K562 (cell line): ENCODE measurements at regions of chr19 and their contacts with region 1.

Region 1: GRCh38 chr19:43463381-43464136 is 1.8 kb downstream of the LYPD3 start:
- DNase-seq: peak; percentile 96 to 99 (median 99)
- ATAC-seq: peak; percentile 96
- H3K4me3 ChIP-seq: peak overlapping the region; percentile 67
- H3K27ac ChIP-seq: peak overlapping the region; percentile 44; the same call in 1 of the 3 replicates
- H3K4me1 ChIP-seq: peaks cover 19 to 27% of the 10 kb centered on the region in 2 experiments
- H3K27me3 ChIP-seq: peaks cover 17 to 18% of the 10 kb centered on the region in 2 experiments; a peak in 4 of 5 replicates
- CTCF ChIP-seq: no peak
- EP300 ChIP-seq: no peak
- POLR2A ChIP-seq: no peak
- RAD21 ChIP-seq: no peak

Region 2: DNA sequence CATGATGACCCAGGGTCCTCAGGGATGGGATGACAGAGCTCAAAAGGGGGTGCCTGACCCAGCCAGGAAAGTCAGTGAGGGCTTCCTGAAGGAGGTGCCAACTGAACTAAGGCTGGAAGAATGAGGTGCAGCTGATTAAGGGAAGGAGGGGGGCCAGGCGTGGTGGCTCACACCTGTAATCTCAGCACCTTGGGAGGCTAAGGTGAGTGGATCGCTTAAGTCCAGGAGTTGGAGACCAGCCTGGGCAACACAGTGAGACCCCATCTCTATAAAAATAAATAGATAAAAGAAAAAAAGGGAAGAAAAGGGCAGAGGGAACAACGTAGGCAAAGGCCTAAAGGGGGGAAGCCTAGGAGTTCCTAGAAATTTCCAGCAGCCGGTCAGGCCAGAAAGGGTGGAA is 10.9 kb after region 1 on chr19:
- CTCF ChIA-PET with region 1: no interaction called
- POLR2A ChIA-PET with region 1: interaction called, 20 read pairs
- in situ Hi-C with region 1: no loop called
- intact Hi-C with region 1: no loop called
- DNase-seq: no peak
- ATAC-seq: no peak
- H3K4me3 ChIP-seq: peak overlapping the region; percentile 48; the same call in 1 of the 2 replicates
- H3K27ac ChIP-seq: no peak overlapping the region; the same call in 2 of the 3 replicates
- H3K4me1 ChIP-seq: peaks cover 10 to 12% of the 10 kb centered on the region in 2 experiments
- H3K27me3 ChIP-seq: no peaks in the 10 kb centered on the region
- CTCF ChIP-seq: no peak
- EP300 ChIP-seq: no peak
- POLR2A ChIP-seq: no peak
- RAD21 ChIP-seq: no peak

Region 3: DNA sequence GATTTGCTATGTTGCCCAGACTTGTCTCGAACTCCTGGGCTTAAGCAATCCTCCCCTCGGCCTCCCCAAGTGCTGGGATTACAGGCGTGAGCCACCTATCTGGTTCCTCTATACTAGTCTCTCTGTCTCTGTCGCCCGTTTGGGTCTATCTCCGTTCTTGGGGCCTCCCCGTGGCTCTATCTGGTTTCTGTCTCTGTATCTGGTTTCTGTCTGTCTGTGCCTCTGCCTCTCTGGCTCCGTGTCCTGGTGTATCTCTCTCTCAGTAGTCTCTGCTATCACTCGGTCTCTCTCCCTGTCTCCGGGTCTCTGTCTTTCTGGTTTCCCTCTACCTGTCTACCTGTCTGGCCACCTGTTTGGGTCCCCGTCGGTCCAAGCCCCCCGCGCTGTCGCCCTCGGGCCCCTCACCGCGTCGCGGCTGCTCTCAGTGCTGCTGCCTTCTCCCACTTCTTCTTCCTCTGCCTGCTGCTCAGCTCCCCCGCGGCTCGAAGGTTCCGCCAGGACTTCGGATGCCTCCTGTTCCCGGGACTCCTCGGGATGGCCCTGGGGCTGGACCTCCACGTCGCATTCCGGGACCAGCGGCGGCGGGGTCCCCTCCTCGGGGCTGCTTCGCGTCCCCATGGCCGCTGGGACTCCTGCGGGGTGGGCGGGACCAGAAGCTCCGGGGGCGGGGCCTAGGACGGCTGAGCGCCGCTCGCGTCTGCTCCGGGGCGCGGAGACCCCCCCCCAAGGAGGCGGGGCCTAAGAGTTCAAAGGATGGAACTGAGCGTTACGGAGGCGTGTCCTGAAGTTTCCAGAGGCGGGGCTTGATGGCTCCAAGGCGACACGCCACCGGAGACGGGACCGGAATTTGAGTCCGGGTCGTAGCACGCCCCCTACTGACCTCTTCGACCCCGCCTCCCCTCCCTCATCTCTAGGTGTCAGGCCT is 40.2 kb after region 1 on chr19:
- CTCF ChIA-PET with region 1: no interaction called
- POLR2A ChIA-PET with region 1: interaction called, 7 read pairs
- in situ Hi-C with region 1: no loop called
- intact Hi-C with region 1: loop called (anchors 5 kb)
- DNase-seq: peak; percentile 97 to 99 (median 98)
- ATAC-seq: peak; percentile 97
- H3K4me3 ChIP-seq: peak overlapping the region; percentile 70
- H3K27ac ChIP-seq: peak overlapping the region; percentile 65
- H3K4me1 ChIP-seq: peaks cover 21 to 33% of the 10 kb centered on the region in 2 experiments
- H3K27me3 ChIP-seq: no peaks in the 10 kb centered on the region
- CTCF ChIP-seq: peak in 2 of 3 experiments; percentile 26 to 52; a peak in 2 of 6 replicates
- EP300 ChIP-seq: no peak
- POLR2A ChIP-seq: peak; percentile 72
- RAD21 ChIP-seq: no peak

Region 4: GRCh38 chr19:43616306-43616705 is 152.7 kb after region 1 on chr19:
- CTCF ChIA-PET with region 1: no interaction called
- POLR2A ChIA-PET with region 1: no interaction called
- in situ Hi-C with region 1: no loop called
- intact Hi-C with region 1: no loop called
- DNase-seq: peak in 2 of 4 experiments; percentile 59 to 80
- ATAC-seq: no peak
- H3K4me3 ChIP-seq: no peak overlapping the region
- H3K27ac ChIP-seq: peak overlapping the region; percentile 73
- H3K4me1 ChIP-seq: peaks cover 35 to 52% of the 10 kb centered on the region in 2 experiments
- H3K27me3 ChIP-seq: no peaks in the 10 kb centered on the region
- CTCF ChIP-seq: no peak
- EP300 ChIP-seq: peak; percentile 79
- POLR2A ChIP-seq: no peak
- RAD21 ChIP-seq: no peak

Region 5: GRCh38 chr19:43687660-43687997 is 224.1 kb after region 1 on chr19:
- CTCF ChIA-PET with region 1: no interaction called
- POLR2A ChIA-PET with region 1: no interaction called
- in situ Hi-C with region 1: no loop called
- intact Hi-C with region 1: no loop called
- DNase-seq: no peak
- ATAC-seq: no peak
- H3K4me3 ChIP-seq: no peak overlapping the region
- H3K27ac ChIP-seq: no peak overlapping the region
- H3K4me1 ChIP-seq: peaks cover 10 to 11% of the 10 kb centered on the region in 2 experiments
- H3K27me3 ChIP-seq: no peaks in the 10 kb centered on the region
- CTCF ChIP-seq: no peak
- EP300 ChIP-seq: no peak
- POLR2A ChIP-seq: no peak
- RAD21 ChIP-seq: no peak